Left lung (tissue), 14 donors: ENCODE measurements at regions of chr1 and their contacts with region 1.

Region 1: DNA sequence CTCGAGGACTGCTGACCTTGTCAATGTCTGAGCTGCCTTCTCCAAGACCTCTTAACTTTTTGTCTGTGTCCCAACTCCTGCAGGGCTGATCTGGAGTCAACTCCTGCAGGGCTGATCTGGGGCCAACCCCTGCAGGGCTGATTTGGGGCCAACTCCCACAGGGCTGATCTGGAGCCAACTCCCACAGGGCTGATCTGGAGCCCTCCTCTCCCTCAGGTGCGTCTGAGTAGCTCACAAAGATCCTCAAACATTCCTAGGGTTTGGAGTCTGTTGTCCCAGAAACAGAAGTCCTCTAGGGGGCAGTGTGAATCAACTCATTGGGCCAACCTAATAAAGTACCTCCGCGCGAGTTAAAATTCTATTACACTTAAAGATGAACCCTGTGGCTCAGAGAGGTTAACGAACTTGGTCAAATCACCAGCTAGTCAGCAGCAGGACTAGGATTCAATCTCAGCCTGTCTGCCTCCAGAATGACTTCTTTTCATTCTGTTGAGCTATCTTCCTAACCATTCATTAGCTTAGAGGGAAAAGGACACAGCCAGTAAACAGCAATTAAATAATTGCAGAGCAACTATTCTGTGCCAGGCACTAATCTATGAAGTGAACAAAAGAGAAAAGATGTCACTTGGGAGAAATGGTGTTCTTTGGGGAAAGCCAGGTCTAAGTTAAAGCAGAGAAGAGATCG is 17.2 kb upstream of the RLF start:
- DNase-seq: peak in 2 of 4 donors; percentile 54 to 76
- ATAC-seq: peak; percentile 91
- H3K4me3 ChIP-seq: no peak overlapping the region
- H3K27ac ChIP-seq: no peak overlapping the region
- H3K4me1 ChIP-seq: peaks cover 0 to 6% of the 10 kb centered on the region in 2 donors
- H3K27me3 ChIP-seq: peaks cover 0 to 28% of the 10 kb centered on the region in 2 donors
- CTCF ChIP-seq: peak; percentile 67 to 76

Region 2: GRCh38 chr1:39859859-39860812 is 283.9 kb before region 1 on chr1:
- intact Hi-C with region 1: no loop called
- DNase-seq: no peak
- ATAC-seq: no peak
- H3K4me3 ChIP-seq: no peak overlapping the region
- H3K27ac ChIP-seq: no peak overlapping the region
- H3K4me1 ChIP-seq: no peaks in the 10 kb centered on the region
- H3K27me3 ChIP-seq: no peaks in the 10 kb centered on the region
- CTCF ChIP-seq: no peak

Region 3: GRCh38 chr1:40096977-40097782 is 46.9 kb before region 1 on chr1 and contains the start of gene PPT1:
- intact Hi-C with region 1: no loop called
- DNase-seq: peak; percentile 52 to 98 (median 80)
- ATAC-seq: peak; percentile 97
- H3K4me3 ChIP-seq: peak within 1 kb of the TSS; percentile 67 to 79
- H3K27ac ChIP-seq: peak within 1 kb of the TSS; percentile 50 to 84
- H3K4me1 ChIP-seq: peaks cover 0 to 48% of the 10 kb centered on the region in 2 donors
- H3K27me3 ChIP-seq: no peaks in the 10 kb centered on the region
- CTCF ChIP-seq: no peak
- polyA plus RNA-seq, gene PPT1: 87.3 to 112 (median 97.4) TPM

Region 4: GRCh38 chr1:40178200-40178599 is 34.2 kb after region 1 on chr1:
- intact Hi-C with region 1: no loop called
- DNase-seq: no peak
- ATAC-seq: no peak
- H3K4me3 ChIP-seq: no peak overlapping the region
- H3K27ac ChIP-seq: no peak overlapping the region
- H3K4me1 ChIP-seq: peaks cover 0 to 15% of the 10 kb centered on the region in 2 donors
- H3K27me3 ChIP-seq: no peaks in the 10 kb centered on the region
- CTCF ChIP-seq: no peak

Region 5: DNA sequence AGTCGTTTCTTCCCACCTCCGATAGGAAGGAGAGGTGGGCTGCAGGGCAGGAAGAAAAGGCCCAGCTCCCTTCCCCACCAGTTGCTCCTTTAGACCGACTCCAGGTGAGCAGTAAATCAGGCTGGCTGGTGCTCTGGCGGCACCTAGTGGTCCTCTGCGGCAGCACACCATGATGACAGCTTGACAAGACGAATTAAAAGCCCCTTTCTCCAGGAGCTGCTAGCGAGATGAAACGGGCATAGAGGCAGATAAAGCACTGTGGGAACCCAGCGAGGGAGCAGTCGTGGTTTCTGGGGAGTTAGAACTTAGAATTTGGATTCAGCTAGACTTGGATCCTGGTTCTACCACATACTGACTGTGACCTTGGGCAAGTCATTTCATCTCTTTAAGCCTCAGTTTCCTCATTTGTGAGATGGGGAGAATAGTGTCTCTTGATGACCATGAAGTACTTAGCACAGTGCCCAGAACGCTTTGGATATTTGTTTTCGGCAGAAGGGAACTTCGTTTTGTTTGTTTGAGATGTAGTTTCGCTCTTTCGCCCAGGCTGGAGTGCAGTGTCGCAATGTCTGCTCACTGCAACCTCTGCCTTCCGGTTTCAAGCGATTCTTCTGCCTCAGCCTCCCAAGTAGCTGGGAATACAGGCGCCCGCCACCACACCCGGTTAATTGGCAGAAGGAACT is 194.9 kb after region 1 on chr1:
- intact Hi-C with region 1: loop called in 1 of 2 experiments (anchors 5 kb)
- DNase-seq: peak; percentile 49 to 92 (median 80)
- ATAC-seq: peak; percentile 98
- H3K4me3 ChIP-seq: peak overlapping the region in 1 of 2 donors; percentile 25
- H3K27ac ChIP-seq: peak overlapping the region; percentile 46 to 91
- H3K4me1 ChIP-seq: peaks cover 0 to 56% of the 10 kb centered on the region in 2 donors
- H3K27me3 ChIP-seq: no peaks in the 10 kb centered on the region
- CTCF ChIP-seq: peak; percentile 92 to 98